Panc1 (cell line): ENCODE measurements at regions of chr4 and their contacts with region 1.

Region 1: GRCh38 chr4:111103944-111104343 is 481.1 kb upstream of the PITX2 start:
- DNase-seq: no peak
- ATAC-seq: no peak
- H3K4me3 ChIP-seq: no peak overlapping the region
- H3K27ac ChIP-seq: no peak overlapping the region
- H3K4me1 ChIP-seq: no peaks in the 10 kb centered on the region
- H3K27me3 ChIP-seq: no peaks in the 10 kb centered on the region
- CTCF ChIP-seq: no peak

Region 2: DNA sequence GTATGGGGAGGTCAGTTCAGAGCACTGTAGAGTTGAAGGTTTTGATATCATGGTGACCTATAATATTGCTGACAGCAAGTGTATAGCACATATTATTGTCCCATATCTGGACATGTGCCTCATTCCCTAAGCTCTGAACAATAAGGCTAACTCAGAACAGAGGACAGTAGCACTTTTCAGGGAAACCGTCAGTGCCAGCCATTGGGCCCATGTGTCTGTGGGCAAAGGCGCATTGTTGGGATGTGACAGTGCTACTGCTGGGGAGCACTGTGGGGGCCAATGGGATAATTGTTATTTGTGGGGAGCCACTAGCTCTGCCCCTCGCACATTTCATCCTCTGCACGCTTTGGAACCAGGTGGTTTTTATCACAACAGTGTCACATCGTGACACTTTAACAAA is 1041.8 kb before region 1 on chr4:
- CTCF ChIA-PET with region 1: no interaction called
- POLR2A ChIA-PET with region 1: no interaction called
- in situ Hi-C with region 1: no loop called
- intact Hi-C with region 1: no loop called
- DNase-seq: no peak
- ATAC-seq: no peak
- H3K4me3 ChIP-seq: no peak overlapping the region
- H3K27ac ChIP-seq: no peak overlapping the region
- H3K4me1 ChIP-seq: no peaks in the 10 kb centered on the region
- H3K27me3 ChIP-seq: no peaks in the 10 kb centered on the region
- CTCF ChIP-seq: no peak

Region 3: DNA sequence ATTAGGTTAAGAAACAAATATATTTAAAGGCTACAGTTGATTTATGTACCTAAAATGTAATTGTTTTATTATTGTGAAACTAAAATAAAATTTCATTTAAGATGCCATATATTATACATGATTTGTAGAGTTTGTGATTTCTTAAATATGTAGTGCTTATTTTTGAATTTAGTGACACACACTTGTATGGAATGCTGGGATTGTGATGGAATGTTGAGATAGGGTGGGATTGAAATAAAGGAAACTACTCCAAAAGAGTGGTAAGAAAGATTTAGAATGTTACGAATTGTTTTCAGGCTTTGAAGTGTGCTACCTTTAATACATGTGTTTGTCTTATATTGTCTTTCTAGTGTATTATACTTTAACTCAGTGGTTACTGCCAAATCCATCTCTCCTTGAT is 150.8 kb before region 1 on chr4:
- CTCF ChIA-PET with region 1: no interaction called
- POLR2A ChIA-PET with region 1: interaction called, 10 read pairs
- in situ Hi-C with region 1: no loop called
- intact Hi-C with region 1: no loop called
- DNase-seq: no peak
- ATAC-seq: no peak
- H3K4me3 ChIP-seq: no peak overlapping the region
- H3K27ac ChIP-seq: no peak overlapping the region
- H3K4me1 ChIP-seq: no peaks in the 10 kb centered on the region
- H3K27me3 ChIP-seq: no peaks in the 10 kb centered on the region
- CTCF ChIP-seq: no peak